ENCODE measurements at regions of chr5 and their contacts with region 1.

Region 1: GRCh38 chr5:75265731-75266130 is 29.1 kb upstream of the ANKRD31 start:
- DNase-seq: peak; percentile 37
- ATAC-seq: peak; percentile 73
- H3K4me3 ChIP-seq: no peak overlapping the region
- H3K27ac ChIP-seq: no peak overlapping the region
- H3K4me1 ChIP-seq: no peaks in the 10 kb centered on the region
- H3K27me3 ChIP-seq: no peaks in the 10 kb centered on the region
- CTCF ChIP-seq: peak; percentile 71 to 77 (median 76); a peak in 5 of 6 replicates
- POLR2A ChIP-seq: no peak
- RAD21 ChIP-seq: peak; percentile 90

Region 2: DNA sequence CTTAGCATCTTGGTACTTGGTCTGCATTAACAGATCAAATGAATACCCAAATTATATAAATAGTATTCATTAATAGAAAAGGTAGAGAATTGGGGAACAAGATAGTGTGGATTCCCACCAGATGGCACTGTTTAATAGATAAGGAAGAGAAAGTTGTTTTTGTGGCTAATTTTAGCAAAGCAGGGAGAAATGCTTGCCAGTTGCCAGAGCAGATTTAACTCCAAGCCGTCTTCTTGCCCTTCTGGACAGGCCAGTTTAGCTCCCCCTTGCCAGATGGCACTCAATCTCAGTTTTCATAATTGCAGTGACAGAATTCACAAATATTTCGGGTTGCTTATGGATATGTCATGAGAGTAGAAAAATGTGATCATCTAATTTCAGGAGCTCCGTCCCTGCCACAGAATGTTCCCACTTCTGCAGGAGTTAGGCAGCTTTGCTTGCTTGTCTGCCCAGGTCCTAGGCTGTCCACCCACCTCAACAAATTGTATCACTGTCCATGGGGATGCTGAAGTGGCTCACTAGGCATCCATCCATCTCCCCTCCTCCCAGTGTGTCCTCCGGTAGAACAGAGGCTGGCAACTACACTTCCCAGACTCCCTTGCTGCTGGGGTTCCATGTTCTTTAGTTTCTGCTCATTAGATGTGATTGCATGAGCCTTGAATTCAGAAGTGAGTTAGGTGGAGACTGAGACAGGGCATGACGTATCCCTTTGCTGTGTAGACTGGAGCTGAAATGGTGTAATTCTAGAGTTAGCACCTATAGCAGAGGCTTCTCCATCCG is 592.5 kb before region 1 on chr5:
- CTCF ChIA-PET with region 1: no interaction called
- POLR2A ChIA-PET with region 1: no interaction called
- RAD21 ChIA-PET with region 1: no interaction called
- intact Hi-C with region 1: loop called (anchors 2 kb)
- DNase-seq: peak; percentile 24
- ATAC-seq: peak; percentile 80
- H3K4me3 ChIP-seq: no peak overlapping the region
- H3K27ac ChIP-seq: no peak overlapping the region
- H3K4me1 ChIP-seq: peaks cover 0 to 6% of the 10 kb centered on the region in 2 experiments; a peak in 2 of 4 replicates
- H3K27me3 ChIP-seq: no peaks in the 10 kb centered on the region
- CTCF ChIP-seq: peak; percentile 43 to 84 (median 49)
- POLR2A ChIP-seq: no peak
- RAD21 ChIP-seq: peak; percentile 87

Region 3: DNA sequence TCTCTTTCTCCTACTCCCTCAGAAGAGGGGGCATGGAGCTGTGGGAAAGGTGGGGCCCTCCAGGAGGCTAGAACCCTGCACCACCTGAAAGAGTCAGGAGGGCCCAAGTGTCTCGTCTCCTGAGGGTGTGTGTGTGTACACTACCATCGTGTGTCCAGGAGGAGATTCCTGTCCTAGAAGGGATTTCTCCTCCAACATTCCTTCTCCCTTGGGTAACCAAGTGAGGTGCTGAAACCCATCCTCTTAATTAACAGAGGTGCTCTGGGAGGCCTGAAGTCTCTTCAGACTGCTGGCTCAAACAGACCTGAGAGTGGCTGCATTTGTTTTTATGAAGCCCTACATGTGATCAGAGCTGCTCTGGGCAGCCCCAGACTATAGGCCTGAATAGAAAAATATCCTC is 338.4 kb before region 1 on chr5:
- CTCF ChIA-PET with region 1: interaction called, 15 read pairs
- POLR2A ChIA-PET with region 1: no interaction called
- RAD21 ChIA-PET with region 1: interaction called, 4 to 5 read pairs
- intact Hi-C with region 1: loop called (anchors 1 kb)
- DNase-seq: no peak
- ATAC-seq: no peak
- H3K4me3 ChIP-seq: no peak overlapping the region
- H3K27ac ChIP-seq: no peak overlapping the region
- H3K4me1 ChIP-seq: no peaks in the 10 kb centered on the region
- H3K27me3 ChIP-seq: no peaks in the 10 kb centered on the region
- CTCF ChIP-seq: no peak
- POLR2A ChIP-seq: no peak
- RAD21 ChIP-seq: no peak

Region 4: DNA sequence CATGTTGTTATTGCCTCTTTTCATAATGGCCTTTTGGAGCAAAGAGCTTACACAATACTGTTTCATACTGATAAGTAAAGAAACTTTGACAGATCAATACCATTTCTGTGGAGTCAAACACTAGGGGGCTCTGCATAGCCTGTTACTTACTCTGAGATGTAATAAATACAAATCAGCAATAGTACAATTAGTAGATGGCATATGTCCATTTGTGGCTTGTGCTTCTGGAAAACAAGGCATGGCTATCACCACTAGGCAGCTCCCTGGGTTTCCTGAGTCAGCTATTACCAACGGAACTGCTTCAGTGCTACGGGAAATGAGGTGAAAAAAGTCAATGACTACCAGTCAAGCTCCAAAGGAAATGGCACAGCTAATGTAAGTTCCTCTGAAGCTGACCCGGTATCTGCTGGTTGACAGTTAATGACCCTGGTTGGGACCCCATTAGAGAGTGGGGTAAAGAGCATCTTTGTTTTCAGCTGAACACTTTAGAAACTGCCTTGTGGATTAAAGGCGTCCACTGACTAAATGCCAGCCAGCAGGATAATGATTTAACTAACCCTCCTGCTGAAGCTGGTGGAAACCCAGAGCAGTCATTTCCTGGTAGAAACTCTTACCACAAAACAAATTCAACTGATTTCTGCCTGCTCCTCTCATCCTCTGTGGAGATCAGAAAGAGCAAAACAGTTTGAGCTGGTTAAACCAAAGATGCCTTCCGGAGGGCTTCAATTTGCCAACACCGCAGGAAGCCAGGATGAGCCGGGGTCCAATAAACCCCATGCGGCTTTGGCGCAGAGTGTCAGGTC is 330.6 kb before region 1 on chr5:
- CTCF ChIA-PET with region 1: interaction called, 10 read pairs
- POLR2A ChIA-PET with region 1: no interaction called
- RAD21 ChIA-PET with region 1: no interaction called
- intact Hi-C with region 1: loop called (anchors 2 kb)
- DNase-seq: peak; percentile 38
- ATAC-seq: peak; percentile 81
- H3K4me3 ChIP-seq: no peak overlapping the region
- H3K27ac ChIP-seq: no peak overlapping the region
- H3K4me1 ChIP-seq: 0 out of 4 replicates have a peak, but pooled peaks cover 0 to 3% of the 10 kb centered on the region in 2 experiments
- H3K27me3 ChIP-seq: no peaks in the 10 kb centered on the region
- CTCF ChIP-seq: peak; percentile 57 to 62 (median 59)
- POLR2A ChIP-seq: no peak
- RAD21 ChIP-seq: peak; percentile 67

Region 5: GRCh38 chr5:75053304-75054133 is 212.2 kb before region 1 on chr5:
- CTCF ChIA-PET with region 1: interaction called, 3 read pairs
- POLR2A ChIA-PET with region 1: no interaction called
- RAD21 ChIA-PET with region 1: interaction called in 1 of 2 experiments, 6 read pairs
- intact Hi-C with region 1: loop called (anchors 1 kb)
- DNase-seq: no peak
- ATAC-seq: peak; percentile 67
- H3K4me3 ChIP-seq: peak overlapping the region; percentile 56 to 67
- H3K27ac ChIP-seq: no peak overlapping the region
- H3K4me1 ChIP-seq: peaks cover 3 to 21% of the 10 kb centered on the region in 2 experiments; a peak in 3 of 4 replicates
- H3K27me3 ChIP-seq: no peaks in the 10 kb centered on the region
- CTCF ChIP-seq: 0 out of 6 replicates have a peak, but pooled peaks of 1 of the 3 experiments have one; percentile 4
- POLR2A ChIP-seq: no peak
- RAD21 ChIP-seq: peak; percentile 27; the same call in 1 of the 2 replicates